ENCODE measurements at regions of chr7 and their contacts with region 1.

Region 1: GRCh38 chr7:30708976-30709375 is 26.7 kb upstream of the CRHR2 start:
- DNase-seq: no peak
- ATAC-seq: no peak
- H3K4me3 Mint-ChIP-seq: no peak overlapping the region
- H3K27ac Mint-ChIP-seq: no peak overlapping the region
- H3K4me1 Mint-ChIP-seq: no peaks in the 10 kb centered on the region
- H3K27me3 Mint-ChIP-seq: no peaks in the 10 kb centered on the region

Region 2: DNA sequence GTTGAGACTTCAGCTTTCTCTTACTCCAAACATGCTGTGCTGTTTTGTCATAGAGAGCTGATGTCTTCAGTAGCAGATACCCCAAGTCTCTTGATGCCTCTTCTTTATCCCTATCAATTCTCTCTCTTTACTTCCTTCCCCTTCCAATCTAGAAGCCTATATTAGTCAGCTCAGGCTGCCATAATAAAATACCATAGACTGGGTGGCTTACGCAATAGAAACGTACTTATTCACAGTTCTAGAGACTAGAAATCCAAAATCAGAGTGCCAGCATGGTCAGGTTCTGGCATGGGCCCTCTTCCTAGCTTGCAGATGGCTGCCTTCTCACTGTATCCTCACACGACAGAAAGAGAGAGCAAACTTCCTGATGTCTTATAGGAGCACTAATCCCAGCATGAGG is 123.3 kb before region 1 on chr7:
- CTCF ChIA-PET with region 1: no interaction called
- DNase-seq: no peak
- ATAC-seq: no peak
- H3K4me3 Mint-ChIP-seq: no peak overlapping the region
- H3K27ac Mint-ChIP-seq: no peak overlapping the region
- H3K4me1 Mint-ChIP-seq: peaks cover 3% of the 10 kb centered on the region
- H3K27me3 Mint-ChIP-seq: no peaks in the 10 kb centered on the region

Region 3: DNA sequence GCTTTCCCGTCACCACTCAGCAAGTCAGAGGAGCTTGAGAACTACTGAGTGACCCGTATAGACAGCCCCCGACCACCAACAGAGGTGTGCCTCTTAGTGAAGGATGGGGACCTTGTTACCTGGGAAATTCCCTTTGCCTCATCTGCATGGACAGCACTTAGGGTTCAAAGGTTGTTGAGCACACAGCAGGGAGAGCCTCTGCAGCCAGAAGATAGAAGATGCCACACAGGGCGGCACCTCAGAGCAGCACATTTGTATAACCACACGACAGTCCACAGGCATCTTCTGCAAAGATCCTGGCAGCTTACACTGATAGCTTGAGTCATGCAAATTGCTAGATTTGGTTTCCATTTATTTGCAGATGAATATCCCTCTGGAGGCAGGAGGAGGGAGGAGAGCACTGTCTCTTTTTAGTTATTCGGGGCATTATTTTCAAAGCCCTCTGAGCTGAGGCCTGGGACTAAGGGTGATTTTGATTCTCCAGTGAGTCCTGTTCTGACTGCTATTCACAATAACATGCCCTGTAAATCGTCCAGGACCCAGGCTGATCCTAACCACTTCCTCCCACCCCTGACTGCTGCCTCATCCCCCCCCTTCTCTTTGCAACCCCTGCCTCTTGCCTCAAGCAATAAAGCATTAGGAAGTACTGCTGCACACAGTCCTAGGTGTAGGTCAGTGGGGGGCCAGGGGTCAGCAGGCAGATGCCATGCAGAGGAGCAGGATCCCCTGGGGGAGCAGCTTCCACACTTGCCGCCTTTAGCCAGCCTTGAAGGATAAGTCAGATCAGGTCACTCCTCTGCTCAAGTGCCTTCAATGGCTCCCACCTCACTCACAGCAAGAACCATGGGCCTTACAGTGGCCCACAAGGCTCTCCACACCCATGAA is 18.3 kb after region 1 on chr7:
- CTCF ChIA-PET with region 1: interaction called, 21 read pairs
- DNase-seq: peak; percentile 88
- ATAC-seq: peak; percentile 93
- H3K4me3 Mint-ChIP-seq: peak overlapping the region; percentile 80
- H3K27ac Mint-ChIP-seq: peak overlapping the region; percentile 91
- H3K4me1 Mint-ChIP-seq: peaks cover 46% of the 10 kb centered on the region
- H3K27me3 Mint-ChIP-seq: no peaks in the 10 kb centered on the region

Measured in activated CD8-positive, alpha-beta memory T cell treated with anti-CD3 and anti-CD28 coated beads, Interleukin-2, amount 10 ng/mL, durations not matched to agents 7 days and 5 days (primary cell).